Psoas muscle (tissue), 8 donors: ENCODE measurements at regions of chr3 and their contacts with region 1.

Region 1: GRCh38 chr3:31092748-31093551 is 198.5 kb upstream of the GADL1 start:
- DNase-seq: peak in 1 of 2 donors; percentile 31
- ATAC-seq: peak; percentile 80 to 91 (median 85)
- H3K4me3 ChIP-seq: no peak overlapping the region
- H3K27ac ChIP-seq: peak overlapping the region; percentile 43
- H3K4me1 ChIP-seq: no peaks in the 10 kb centered on the region
- H3K27me3 ChIP-seq: no peaks in the 10 kb centered on the region
- CTCF ChIP-seq: no peak

Region 2: GRCh38 chr3:31041161-31041978 is 51.6 kb before region 1 on chr3:
- intact Hi-C with region 1: loop called in 1 of 2 experiments (anchors 5 kb)
- DNase-seq: no peak
- ATAC-seq: peak; percentile 58 to 91 (median 86)
- H3K4me3 ChIP-seq: no peak overlapping the region
- H3K27ac ChIP-seq: peak overlapping the region; percentile 62
- H3K4me1 ChIP-seq: peaks cover 16% of the 10 kb centered on the region
- H3K27me3 ChIP-seq: no peaks in the 10 kb centered on the region
- CTCF ChIP-seq: no peak

Region 3: DNA sequence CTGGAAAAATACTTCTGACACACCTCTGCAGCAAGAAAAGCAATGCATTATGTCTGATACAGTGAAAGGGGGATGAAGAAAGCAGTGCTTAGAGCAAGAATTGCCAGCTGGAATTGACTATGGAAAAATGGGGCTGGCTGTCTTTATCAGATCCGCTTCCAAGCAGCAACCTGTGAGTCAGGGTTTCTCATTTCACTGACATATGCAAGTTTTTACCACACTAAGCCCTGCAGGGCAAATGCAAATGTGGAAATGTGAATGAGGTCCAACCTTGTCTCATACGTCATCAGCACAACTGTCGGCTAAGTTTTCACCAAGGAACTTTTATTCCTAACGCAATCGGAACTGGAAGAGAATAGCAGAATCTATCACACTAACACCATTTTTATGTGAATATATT is 25.9 kb before region 1 on chr3:
- intact Hi-C with region 1: no loop called
- DNase-seq: no peak
- ATAC-seq: peak; percentile 97 to 99 (median 99)
- H3K4me3 ChIP-seq: peak overlapping the region; percentile 41
- H3K27ac ChIP-seq: peak overlapping the region; percentile 26
- H3K4me1 ChIP-seq: no peaks in the 10 kb centered on the region
- H3K27me3 ChIP-seq: no peaks in the 10 kb centered on the region
- CTCF ChIP-seq: no peak

Region 4: DNA sequence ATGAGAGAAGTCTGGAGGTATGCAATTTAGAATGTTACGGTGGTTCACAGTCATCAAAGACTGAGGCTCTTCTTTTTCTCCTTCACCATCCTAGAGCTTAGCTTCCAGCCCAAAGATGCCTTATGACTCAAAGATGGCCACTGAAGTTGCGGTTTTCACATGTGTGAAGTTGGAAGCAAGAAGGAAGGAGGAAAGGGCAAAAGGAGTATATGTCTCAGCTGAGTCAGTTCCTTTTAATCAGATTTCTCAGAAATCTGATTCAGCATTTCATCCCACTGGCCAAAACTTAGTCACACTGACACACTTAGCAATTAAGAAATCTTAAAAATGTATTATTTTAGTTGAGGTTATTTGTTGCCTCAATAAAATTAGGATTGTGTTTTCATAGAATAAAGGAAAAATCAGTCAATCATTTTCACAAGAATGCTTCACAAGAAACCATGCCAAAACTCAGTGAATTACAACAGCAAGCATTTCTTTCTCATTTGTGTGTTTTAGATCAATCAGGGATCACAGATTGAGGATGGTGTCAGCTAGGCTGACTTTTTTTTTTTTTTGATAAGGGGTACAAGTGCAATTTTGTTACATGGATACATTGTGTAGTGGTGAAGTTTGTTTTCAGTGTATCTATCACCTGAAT is 12.6 kb after region 1 on chr3:
- intact Hi-C with region 1: no loop called
- DNase-seq: no peak
- ATAC-seq: peak in 1 of 4 donors; percentile 31
- H3K4me3 ChIP-seq: no peak overlapping the region
- H3K27ac ChIP-seq: no peak overlapping the region
- H3K4me1 ChIP-seq: no peaks in the 10 kb centered on the region
- H3K27me3 ChIP-seq: no peaks in the 10 kb centered on the region
- CTCF ChIP-seq: no peak